ENCODE measurements at regions of chr4 and their contacts with region 1.

Region 1: GRCh38 chr4:38319456-38320342 is 344.3 kb upstream of the KLF3 start:
- DNase-seq: peak; percentile 77
- ATAC-seq: peak; percentile 85
- H3K4me3 ChIP-seq: peak overlapping the region in 1 of 2 experiments; percentile 35; a peak in 2 of 4 replicates
- H3K27ac ChIP-seq: peak overlapping the region; percentile 73
- H3K4me1 ChIP-seq: peaks cover 4% of the 10 kb centered on the region
- H3K27me3 ChIP-seq: no peaks in the 10 kb centered on the region
- CTCF ChIP-seq: peak; percentile 93

Region 2: GRCh38 chr4:38298868-38299713 is 20.6 kb before region 1 on chr4:
- CTCF ChIA-PET with region 1: interaction called, 14 read pairs
- POLR2A ChIA-PET with region 1: no interaction called
- in situ Hi-C with region 1: no loop called
- intact Hi-C with region 1: no loop called
- DNase-seq: no peak
- ATAC-seq: no peak
- H3K4me3 ChIP-seq: no peak overlapping the region
- H3K27ac ChIP-seq: no peak overlapping the region
- H3K4me1 ChIP-seq: no peaks in the 10 kb centered on the region
- H3K27me3 ChIP-seq: no peaks in the 10 kb centered on the region
- CTCF ChIP-seq: no peak

Measured in Panc1 (cell line).